ENCODE measurements at regions of chr1 and their contacts with region 1.

Region 1: GRCh38 chr1:204363335-204364124 is 3.8 kb upstream of the PLEKHA6 start:
- DNase-seq: peak; percentile 74 to 78 (median 76)
- H3K4me3 ChIP-seq: peak overlapping the region; percentile 68 to 69
- H3K4me3 Mint-ChIP-seq: peak overlapping the region; percentile 59 to 87 (median 78)
- H3K27ac ChIP-seq: peak overlapping the region; percentile 27
- H3K27ac Mint-ChIP-seq: peak overlapping the region in 6 of 7 donors; percentile 9 to 70 (median 48)
- H3K4me1 ChIP-seq: peaks cover 13% of the 10 kb centered on the region
- H3K4me1 Mint-ChIP-seq: peaks cover 3 to 13% (median 8%) of the 10 kb centered on the region in 4 donors
- H3K27me3 ChIP-seq: no peaks in the 10 kb centered on the region
- H3K27me3 Mint-ChIP-seq: peaks cover 0 to 6% of the 10 kb centered on the region in 2 donors

Region 2: GRCh38 chr1:203861379-203862184 is 501.9 kb before region 1 on chr1 and contains the start of gene SNRPE:
- CTCF ChIA-PET with region 1: interaction called, 4 read pairs
- POLR2A ChIA-PET with region 1: interaction called, 3 read pairs
- intact Hi-C with region 1: loop called (anchors 1 kb)
- DNase-seq: peak; percentile 96 to 98 (median 98)
- H3K4me3 ChIP-seq: peak within 1 kb of the TSS; percentile 95 to 98
- H3K4me3 Mint-ChIP-seq: peak within 1 kb of the TSS; percentile 99 to 100 (median 100)
- H3K27ac ChIP-seq: peak within 1 kb of the TSS; percentile 82
- H3K27ac Mint-ChIP-seq: peak within 1 kb of the TSS; percentile 97 to 99 (median 98)
- H3K4me1 ChIP-seq: peaks cover 15% of the 10 kb centered on the region
- H3K4me1 Mint-ChIP-seq: peaks cover 15 to 33% (median 24%) of the 10 kb centered on the region in 4 donors
- H3K27me3 ChIP-seq: no peaks in the 10 kb centered on the region
- H3K27me3 Mint-ChIP-seq: no peaks in the 10 kb centered on the region
- total RNA-seq, gene SNRPE: 63.3 to 69.9 TPM

Region 3: DNA sequence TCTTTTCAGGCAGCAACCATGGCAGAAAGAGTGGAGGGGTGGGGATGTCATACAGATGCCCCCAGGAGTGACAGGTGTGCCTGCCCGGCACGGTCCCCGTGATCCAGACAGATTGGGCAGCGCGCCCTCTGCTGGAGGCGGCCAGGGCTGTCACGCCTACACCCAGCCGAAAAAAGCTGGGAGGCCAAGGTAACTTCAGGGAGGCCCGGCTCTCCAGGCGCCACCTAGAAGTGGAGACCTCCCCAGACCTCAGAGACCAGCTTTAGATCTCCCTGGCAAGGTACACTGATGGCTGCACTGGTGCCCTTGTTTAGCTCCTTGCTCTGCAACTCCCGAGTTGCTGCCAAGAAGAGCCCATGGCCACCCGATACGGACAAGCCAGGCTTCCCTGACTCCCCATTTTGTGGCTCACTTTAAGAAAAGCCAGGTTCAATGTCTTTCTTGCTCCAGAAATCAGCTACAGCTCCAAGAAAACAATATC is 156.4 kb before region 1 on chr1:
- CTCF ChIA-PET with region 1: interaction called, 17 read pairs
- POLR2A ChIA-PET with region 1: no interaction called
- intact Hi-C with region 1: loop called (anchors 1 kb)
- DNase-seq: peak; percentile 50 to 61 (median 55)
- H3K4me3 ChIP-seq: no peak overlapping the region
- H3K4me3 Mint-ChIP-seq: no peak overlapping the region
- H3K27ac ChIP-seq: no peak overlapping the region
- H3K27ac Mint-ChIP-seq: no peak overlapping the region
- H3K4me1 ChIP-seq: no peaks in the 10 kb centered on the region
- H3K4me1 Mint-ChIP-seq: peaks cover 0 to 4% (median 2%) of the 10 kb centered on the region in 4 donors
- H3K27me3 ChIP-seq: peaks cover 5% of the 10 kb centered on the region
- H3K27me3 Mint-ChIP-seq: peaks cover 20 to 32% of the 10 kb centered on the region in 2 donors

Region 4: GRCh38 chr1:204257954-204258752 is 105.4 kb before region 1 on chr1:
- CTCF ChIA-PET with region 1: interaction called, 14 read pairs
- POLR2A ChIA-PET with region 1: no interaction called
- intact Hi-C with region 1: loop called (anchors 1 kb)
- DNase-seq: no peak
- H3K4me3 ChIP-seq: no peak overlapping the region
- H3K4me3 Mint-ChIP-seq: no peak overlapping the region
- H3K27ac ChIP-seq: no peak overlapping the region
- H3K27ac Mint-ChIP-seq: peak overlapping the region in 1 of 7 donors; percentile 5
- H3K4me1 ChIP-seq: no peaks in the 10 kb centered on the region
- H3K4me1 Mint-ChIP-seq: no peaks in the 10 kb centered on the region
- H3K27me3 ChIP-seq: no peaks in the 10 kb centered on the region
- H3K27me3 Mint-ChIP-seq: peaks cover 0 to 2% of the 10 kb centered on the region in 2 donors

Region 5: GRCh38 chr1:204377795-204378608 is 14.5 kb after region 1 on chr1:
- CTCF ChIA-PET with region 1: interaction called, 11 read pairs
- POLR2A ChIA-PET with region 1: interaction called, 3 read pairs
- intact Hi-C with region 1: no loop called
- DNase-seq: peak; percentile 40 to 60 (median 43)
- H3K4me3 ChIP-seq: peak overlapping the region; percentile 51 to 63
- H3K4me3 Mint-ChIP-seq: peak overlapping the region; percentile 85 to 92 (median 88)
- H3K27ac ChIP-seq: no peak overlapping the region
- H3K27ac Mint-ChIP-seq: peak overlapping the region in 3 of 7 donors; percentile 9 to 71 (median 51)
- H3K4me1 ChIP-seq: peaks cover 11% of the 10 kb centered on the region
- H3K4me1 Mint-ChIP-seq: peaks cover 9 to 16% (median 11%) of the 10 kb centered on the region in 4 donors
- H3K27me3 ChIP-seq: peaks cover 26% of the 10 kb centered on the region
- H3K27me3 Mint-ChIP-seq: peaks cover 12 to 16% of the 10 kb centered on the region in 2 donors

Region 6: GRCh38 chr1:204398217-204399081 is 34.9 kb after region 1 on chr1:
- CTCF ChIA-PET with region 1: interaction called, 13 read pairs
- POLR2A ChIA-PET with region 1: no interaction called
- intact Hi-C with region 1: no loop called
- DNase-seq: peak; percentile 67 to 78 (median 71)
- H3K4me3 ChIP-seq: no peak overlapping the region
- H3K4me3 Mint-ChIP-seq: no peak overlapping the region
- H3K27ac ChIP-seq: no peak overlapping the region
- H3K27ac Mint-ChIP-seq: peak overlapping the region; percentile 74 to 92 (median 89)
- H3K4me1 ChIP-seq: peaks cover under 1% of the 10 kb centered on the region
- H3K4me1 Mint-ChIP-seq: peaks cover 0 to 12% (median 4%) of the 10 kb centered on the region in 4 donors
- H3K27me3 ChIP-seq: no peaks in the 10 kb centered on the region
- H3K27me3 Mint-ChIP-seq: no peaks in the 10 kb centered on the region

Region 7: DNA sequence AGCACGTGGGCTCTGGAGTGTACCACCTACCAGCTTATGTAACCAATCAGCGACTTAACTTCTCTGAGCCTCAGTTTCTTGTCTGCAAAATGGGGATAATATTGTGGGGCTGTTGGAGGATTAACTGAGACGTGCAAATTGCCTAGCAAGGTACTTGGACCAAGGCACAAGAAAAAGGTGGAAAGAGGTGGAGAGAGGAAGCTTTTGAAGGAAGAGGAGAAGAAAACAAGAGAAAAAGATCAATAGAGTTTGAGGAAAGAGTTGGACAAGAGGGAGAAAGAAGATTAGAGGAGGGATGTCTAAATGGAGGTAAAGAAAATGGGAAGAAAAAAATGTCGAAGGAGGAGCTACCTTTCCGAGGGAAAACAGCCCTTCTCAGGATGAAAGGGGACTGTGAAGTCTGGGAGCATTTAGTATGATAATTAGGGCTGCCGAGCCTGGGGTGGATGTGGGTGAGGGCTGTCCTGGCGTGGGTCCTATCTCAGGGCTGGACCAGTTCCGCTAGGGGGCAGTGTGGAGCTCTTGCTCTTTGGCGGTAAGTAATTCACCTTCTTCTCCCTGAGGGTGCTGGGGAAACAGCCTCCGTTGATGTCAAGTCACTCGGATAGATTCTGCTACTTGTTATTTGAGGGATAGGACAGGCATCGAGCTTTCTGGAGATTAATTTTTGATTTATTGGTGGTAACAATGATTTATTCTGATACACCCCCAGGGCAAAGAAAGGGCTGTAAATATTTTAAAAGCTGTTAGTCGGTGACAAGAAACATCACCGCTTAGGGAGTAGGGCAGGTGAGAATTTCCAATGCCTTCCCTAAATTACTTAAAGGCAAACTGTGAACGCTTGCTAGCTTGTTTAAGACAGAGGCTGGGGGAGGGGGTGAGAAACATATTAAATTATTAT is 428.2 kb after region 1 on chr1:
- CTCF ChIA-PET with region 1: no interaction called
- POLR2A ChIA-PET with region 1: no interaction called
- intact Hi-C with region 1: no loop called
- DNase-seq: peak; percentile 67 to 73 (median 69)
- H3K4me3 ChIP-seq: no peak overlapping the region
- H3K4me3 Mint-ChIP-seq: no peak overlapping the region
- H3K27ac ChIP-seq: no peak overlapping the region
- H3K27ac Mint-ChIP-seq: no peak overlapping the region
- H3K4me1 ChIP-seq: no peaks in the 10 kb centered on the region
- H3K4me1 Mint-ChIP-seq: peaks cover 0 to 5% (median 0%) of the 10 kb centered on the region in 4 donors
- H3K27me3 ChIP-seq: peaks cover 4% of the 10 kb centered on the region
- H3K27me3 Mint-ChIP-seq: peaks cover 30 to 32% of the 10 kb centered on the region in 2 donors

Region 8: GRCh38 chr1:205013683-205014367 is 650.3 kb after region 1 on chr1:
- CTCF ChIA-PET with region 1: no interaction called
- POLR2A ChIA-PET with region 1: no interaction called
- intact Hi-C with region 1: no loop called
- DNase-seq: no peak
- H3K4me3 ChIP-seq: no peak overlapping the region
- H3K4me3 Mint-ChIP-seq: no peak overlapping the region
- H3K27ac ChIP-seq: no peak overlapping the region
- H3K27ac Mint-ChIP-seq: peak overlapping the region in 1 of 7 donors; percentile 35
- H3K4me1 ChIP-seq: no peaks in the 10 kb centered on the region
- H3K4me1 Mint-ChIP-seq: no peaks in the 10 kb centered on the region
- H3K27me3 ChIP-seq: no peaks in the 10 kb centered on the region
- H3K27me3 Mint-ChIP-seq: peaks cover 3 to 4% of the 10 kb centered on the region in 2 donors